ENCODE measurements at regions of chr7 and their contacts with region 1.

Region 1: DNA sequence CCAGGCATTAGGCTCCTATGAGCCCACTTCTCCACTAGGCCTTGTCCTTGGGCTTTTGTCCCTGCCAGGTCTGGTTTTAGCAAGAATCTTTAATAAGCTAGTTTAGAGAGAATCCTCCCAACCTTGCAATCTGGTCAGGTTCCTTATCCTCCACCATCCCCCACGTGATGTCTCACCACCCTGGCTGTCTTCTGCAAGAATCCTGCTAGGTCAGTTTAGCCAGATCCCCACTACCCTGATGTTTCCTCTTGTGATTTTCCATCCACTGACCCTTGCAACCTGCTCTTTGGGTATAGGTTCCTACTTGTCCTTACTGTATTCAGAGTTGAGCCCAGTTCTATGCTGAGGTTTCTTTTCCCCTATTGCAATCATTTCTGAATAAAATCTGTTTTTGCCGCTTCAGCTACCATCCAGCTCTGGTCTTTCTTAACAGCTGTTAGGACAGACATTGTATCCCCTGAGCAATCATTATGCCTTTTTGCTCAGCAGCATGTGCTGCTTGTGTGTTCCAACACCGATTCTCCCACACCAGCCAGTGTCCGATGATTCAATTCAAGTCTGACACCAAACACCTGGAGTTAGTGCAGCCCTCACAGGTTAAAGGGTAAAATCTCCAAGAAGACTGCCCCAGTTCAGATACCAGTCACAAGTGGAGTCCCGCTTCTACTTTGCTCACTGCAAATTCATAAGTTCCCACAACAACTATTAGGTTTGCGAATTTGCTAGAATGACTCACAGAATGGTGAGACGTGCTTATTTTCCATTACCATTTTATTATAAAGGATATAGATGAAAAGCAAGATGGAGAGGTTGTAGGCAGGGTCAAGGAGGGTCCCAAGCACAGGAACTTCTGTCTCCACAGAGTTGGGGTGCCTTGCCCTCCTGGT is 62.2 kb upstream of the ADCY1 start:
- DNase-seq: no peak
- ATAC-seq: no peak
- H3K4me3 ChIP-seq: no peak overlapping the region
- H3K27ac ChIP-seq: no peak overlapping the region
- H3K4me1 ChIP-seq: no peaks in the 10 kb centered on the region
- H3K27me3 ChIP-seq: no peaks in the 10 kb centered on the region

Region 2: GRCh38 chr7:45524445-45524844 is 12.5 kb after region 1 on chr7:
- intact Hi-C with region 1: loop called in 1 of 2 experiments (anchors 1 kb)
- DNase-seq: no peak
- ATAC-seq: no peak
- H3K4me3 ChIP-seq: no peak overlapping the region
- H3K27ac ChIP-seq: no peak overlapping the region
- H3K4me1 ChIP-seq: no peaks in the 10 kb centered on the region
- H3K27me3 ChIP-seq: no peaks in the 10 kb centered on the region

Measured in aorta (tissue), 5 donors.